ENCODE measurements at regions of chr2 and their contacts with region 1.

Region 1: DNA sequence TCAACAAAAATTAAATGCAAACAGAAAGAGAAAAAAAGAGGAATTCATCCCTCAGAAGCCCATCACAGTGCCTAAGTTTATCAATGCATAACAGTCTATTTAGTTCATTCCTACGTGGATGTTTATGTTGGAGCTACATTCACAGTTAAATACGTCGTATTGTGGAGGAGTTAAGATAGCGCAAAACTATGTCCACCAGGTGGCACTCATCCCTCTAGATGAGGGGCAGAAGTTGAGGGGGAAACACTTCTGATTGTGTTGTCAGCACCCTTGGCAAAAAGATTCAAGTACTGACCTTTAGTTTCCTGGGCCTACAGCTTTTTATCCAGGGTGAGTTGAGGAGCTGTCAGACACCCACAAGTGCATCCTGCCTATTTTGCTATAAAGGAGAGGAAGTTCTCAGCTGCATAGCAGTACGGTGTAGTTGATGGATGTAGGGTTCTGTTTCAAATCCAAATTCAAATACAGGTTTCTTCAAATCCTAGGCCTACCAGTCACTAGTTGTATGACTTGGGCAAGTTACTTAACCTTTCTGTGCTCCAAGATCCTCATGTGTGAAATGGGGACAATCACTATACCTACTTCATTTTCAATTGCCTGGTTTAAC is 26.8 kb upstream of the MYO1B start:
- DNase-seq: peak; percentile 73
- ATAC-seq: peak; percentile 56
- H3K4me3 ChIP-seq: no peak overlapping the region
- H3K4me3 Mint-ChIP-seq: no peak overlapping the region
- H3K27ac ChIP-seq: no peak overlapping the region
- H3K27ac Mint-ChIP-seq: no peak overlapping the region
- H3K4me1 ChIP-seq: peaks cover 7 to 12% of the 10 kb centered on the region in 2 donors
- H3K4me1 Mint-ChIP-seq: peaks cover 20% of the 10 kb centered on the region
- H3K27me3 ChIP-seq: no peaks in the 10 kb centered on the region
- H3K27me3 Mint-ChIP-seq: peaks cover 3% of the 10 kb centered on the region
- CTCF ChIP-seq: peak; percentile 81

Region 2: GRCh38 chr2:191051825-191052778 is 166.3 kb before region 1 on chr2:
- CTCF ChIA-PET with region 1: interaction called, 14 read pairs
- POLR2A ChIA-PET with region 1: no interaction called
- intact Hi-C with region 1: loop called (anchors 1 kb)
- DNase-seq: peak; percentile 71
- ATAC-seq: peak; percentile 64
- H3K4me3 ChIP-seq: peak overlapping the region in 1 of 5 experiments; percentile 3
- H3K4me3 Mint-ChIP-seq: no peak overlapping the region
- H3K27ac ChIP-seq: no peak overlapping the region
- H3K27ac Mint-ChIP-seq: no peak overlapping the region
- H3K4me1 ChIP-seq: peaks cover 6 to 10% of the 10 kb centered on the region in 2 donors
- H3K4me1 Mint-ChIP-seq: no peaks in the 10 kb centered on the region
- H3K27me3 ChIP-seq: peaks cover 0 to 10% (median 4%) of the 10 kb centered on the region in 4 experiments
- H3K27me3 Mint-ChIP-seq: peaks cover 21% of the 10 kb centered on the region
- CTCF ChIP-seq: peak; percentile 86

Region 3: DNA sequence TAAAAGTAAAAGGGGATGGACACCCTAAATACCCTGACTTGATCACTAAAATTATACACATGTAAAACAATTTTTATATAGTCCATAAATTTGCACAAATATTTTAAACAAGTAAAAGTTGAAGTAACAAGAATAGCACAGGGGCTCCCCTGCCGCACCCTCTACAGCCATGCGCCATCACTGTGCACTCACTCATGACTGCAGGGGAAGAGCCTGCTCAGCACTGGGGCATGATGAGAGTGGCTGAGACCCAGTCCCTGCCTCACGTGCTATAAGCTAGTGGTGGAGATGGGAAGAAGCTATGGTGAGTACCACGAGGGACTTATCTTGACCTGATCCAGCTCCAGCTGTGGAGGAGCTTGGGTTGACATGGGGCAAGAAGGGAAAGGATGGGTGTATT is 20.1 kb before region 1 on chr2:
- CTCF ChIA-PET with region 1: interaction called, 13 read pairs
- POLR2A ChIA-PET with region 1: no interaction called
- intact Hi-C with region 1: no loop called
- DNase-seq: no peak
- ATAC-seq: no peak
- H3K4me3 ChIP-seq: no peak overlapping the region
- H3K4me3 Mint-ChIP-seq: no peak overlapping the region
- H3K27ac ChIP-seq: no peak overlapping the region
- H3K27ac Mint-ChIP-seq: no peak overlapping the region
- H3K4me1 ChIP-seq: peaks cover 10 to 17% of the 10 kb centered on the region in 2 donors
- H3K4me1 Mint-ChIP-seq: peaks cover 25% of the 10 kb centered on the region
- H3K27me3 ChIP-seq: no peaks in the 10 kb centered on the region
- H3K27me3 Mint-ChIP-seq: no peaks in the 10 kb centered on the region
- CTCF ChIP-seq: no peak

Region 4: DNA sequence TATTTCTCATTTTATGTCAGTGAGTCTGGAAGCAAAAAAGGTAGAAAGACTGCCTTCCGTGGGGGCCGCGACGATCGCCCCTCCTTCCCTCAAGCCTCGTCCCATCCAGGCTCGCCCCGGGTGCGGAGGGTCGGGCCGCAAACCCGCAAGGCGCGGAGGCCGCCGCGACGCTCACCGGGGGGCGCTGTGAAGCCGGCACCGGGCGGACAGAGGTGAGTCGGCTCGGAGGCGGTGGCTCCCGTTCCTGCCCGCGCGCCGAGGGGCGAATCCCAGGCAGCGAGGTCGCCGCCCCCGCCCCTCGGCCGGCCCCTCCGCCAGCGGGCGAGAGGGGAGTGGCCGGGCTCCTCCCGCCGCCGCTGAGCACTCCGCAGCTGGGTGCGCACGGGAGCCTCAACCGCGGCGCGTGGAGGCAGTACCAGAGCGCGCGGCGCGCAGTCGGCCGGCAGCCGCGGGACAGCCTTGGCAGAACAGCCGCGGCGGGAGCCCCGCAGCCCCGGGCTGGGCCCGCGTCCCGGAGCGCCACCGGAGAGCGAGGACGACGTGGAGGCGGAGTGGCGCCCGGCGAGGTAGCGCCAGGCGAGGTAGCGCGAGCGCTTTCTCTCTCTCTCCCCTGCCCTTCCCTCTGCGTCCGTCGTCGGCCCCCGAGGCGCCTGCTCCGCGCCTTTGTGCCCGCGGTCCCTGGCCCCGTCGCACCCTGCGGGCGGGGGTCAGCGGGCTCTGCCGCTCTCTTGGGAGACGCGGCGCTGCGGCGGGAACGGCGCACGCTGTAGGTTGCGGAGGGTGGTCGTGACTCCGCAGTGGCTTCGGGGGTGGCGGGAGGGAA is 26.9 kb after region 1 on chr2 and contains the start of gene MYO1B:
- CTCF ChIA-PET with region 1: interaction called, 14 read pairs
- POLR2A ChIA-PET with region 1: no interaction called
- intact Hi-C with region 1: no loop called
- DNase-seq: peak; percentile 81
- ATAC-seq: peak; percentile 78
- H3K4me3 ChIP-seq: peak within 1 kb of the TSS; percentile 30 to 76 (median 72)
- H3K4me3 Mint-ChIP-seq: peak within 1 kb of the TSS; percentile 88
- H3K27ac ChIP-seq: no peak within 1 kb of the TSS
- H3K27ac Mint-ChIP-seq: peak within 1 kb of the TSS; percentile 22
- H3K4me1 ChIP-seq: peaks cover 4 to 18% of the 10 kb centered on the region in 2 donors
- H3K4me1 Mint-ChIP-seq: peaks cover 19% of the 10 kb centered on the region
- H3K27me3 ChIP-seq: no peaks in the 10 kb centered on the region
- H3K27me3 Mint-ChIP-seq: peaks cover 7% of the 10 kb centered on the region
- CTCF ChIP-seq: peak; percentile 45
- total RNA-seq, gene MYO1B: 0.67 and 1.2 TPM in 2 replicates

Region 5: GRCh38 chr2:191369036-191369435 is 150.6 kb after region 1 on chr2:
- CTCF ChIA-PET with region 1: interaction called, 3 read pairs
- POLR2A ChIA-PET with region 1: no interaction called
- intact Hi-C with region 1: loop called (anchors 1 kb)
- DNase-seq: peak; percentile 14
- ATAC-seq: no peak
- H3K4me3 ChIP-seq: no peak overlapping the region
- H3K4me3 Mint-ChIP-seq: no peak overlapping the region
- H3K27ac ChIP-seq: no peak overlapping the region
- H3K27ac Mint-ChIP-seq: no peak overlapping the region
- H3K4me1 ChIP-seq: no peaks in the 10 kb centered on the region
- H3K4me1 Mint-ChIP-seq: no peaks in the 10 kb centered on the region
- H3K27me3 ChIP-seq: no peaks in the 10 kb centered on the region
- H3K27me3 Mint-ChIP-seq: no peaks in the 10 kb centered on the region
- CTCF ChIP-seq: no peak

Measured in B cell (primary cell).